Mammary epithelial cell (primary cell): ENCODE measurements at regions of chr16 and their contacts with region 1.

Region 1: GRCh38 chr16:8936421-8936820 is 27.3 kb downstream of the USP7 start:
- DNase-seq: peak; percentile 74
- H3K4me3 ChIP-seq: no peak overlapping the region
- H3K27ac ChIP-seq: no peak overlapping the region
- H3K4me1 ChIP-seq: peaks cover 14% of the 10 kb centered on the region
- H3K27me3 ChIP-seq: no peaks in the 10 kb centered on the region
- CTCF ChIP-seq: peak; percentile 66 to 88

Region 2: DNA sequence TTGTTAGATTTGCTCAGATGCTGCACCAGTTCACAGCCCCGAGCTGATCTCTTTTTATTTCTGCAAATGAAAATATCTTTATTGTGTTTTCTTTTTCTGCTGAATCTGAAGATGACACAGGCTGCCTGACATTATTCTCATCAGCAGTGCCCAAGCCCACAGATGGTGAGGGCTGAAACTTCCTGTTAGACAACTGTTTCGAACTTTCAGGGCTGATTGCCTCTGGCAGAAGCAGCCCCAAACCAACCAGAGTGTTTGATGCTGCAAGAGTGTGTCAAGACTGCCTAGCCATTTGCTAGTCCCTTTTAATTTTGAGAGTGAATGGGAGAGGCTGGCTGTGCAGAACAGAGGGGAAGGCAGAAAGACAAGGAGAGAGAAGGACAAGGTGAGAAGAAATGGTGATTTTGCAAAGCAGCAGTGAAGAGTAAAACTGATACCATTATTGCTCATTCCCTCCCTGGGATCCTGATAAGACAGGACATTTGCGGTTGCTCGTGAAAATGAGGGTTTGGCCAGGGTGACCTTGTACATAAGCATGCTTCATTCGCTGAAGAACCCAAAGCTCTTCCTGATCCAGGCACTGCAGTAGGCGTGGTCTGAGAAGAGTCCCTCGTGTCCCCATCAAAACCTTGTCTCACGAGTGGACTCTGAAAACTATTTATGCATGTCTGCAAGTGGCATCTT is 423.3 kb before region 1 on chr16:
- CTCF ChIA-PET with region 1: no interaction called
- dilution Hi-C with region 1: no loop called
- in situ Hi-C with region 1: no loop called
- intact Hi-C with region 1: no loop called
- DNase-seq: no peak
- H3K4me3 ChIP-seq: no peak overlapping the region
- H3K27ac ChIP-seq: no peak overlapping the region
- H3K4me1 ChIP-seq: no peaks in the 10 kb centered on the region
- H3K27me3 ChIP-seq: no peaks in the 10 kb centered on the region
- CTCF ChIP-seq: no peak

Region 3: DNA sequence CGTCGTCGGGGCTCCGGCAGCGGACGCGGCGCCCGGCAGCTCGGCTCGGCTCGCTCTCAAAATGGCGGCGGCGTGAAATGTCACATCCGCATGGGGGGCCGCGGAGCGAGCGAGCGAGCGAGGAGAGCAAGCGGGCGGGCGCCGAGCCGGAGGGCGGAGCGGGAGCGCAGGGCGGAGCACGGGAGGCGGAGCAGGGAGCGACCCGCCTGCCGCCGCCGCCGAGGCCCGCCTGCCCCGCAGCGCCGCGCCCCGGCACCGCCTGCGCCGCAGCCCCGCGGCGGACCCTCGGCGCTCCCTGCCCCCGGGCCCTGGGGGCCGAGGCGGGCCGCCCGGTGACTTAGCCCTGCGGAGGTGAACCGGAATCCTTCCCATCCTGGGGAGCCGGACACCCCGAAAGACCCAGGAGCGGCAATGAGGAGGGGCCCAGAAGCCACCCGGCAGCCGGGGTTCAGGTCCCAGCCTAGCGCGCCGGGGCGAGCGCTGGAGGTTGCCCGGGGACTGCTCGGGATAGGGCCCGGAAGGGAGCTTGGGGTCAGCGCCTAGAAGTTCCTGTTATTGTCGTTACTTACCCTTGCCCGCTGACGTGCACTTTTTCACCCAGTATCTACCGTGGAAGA is 27.5 kb after region 1 on chr16 and contains the start of gene USP7:
- CTCF ChIA-PET with region 1: no interaction called
- dilution Hi-C with region 1: no loop called
- in situ Hi-C with region 1: no loop called
- intact Hi-C with region 1: loop called (anchors 2 kb)
- DNase-seq: peak; percentile 88
- H3K4me3 ChIP-seq: peak within 1 kb of the TSS; percentile 69 to 80 (median 69)
- H3K27ac ChIP-seq: peak within 1 kb of the TSS; percentile 24
- H3K4me1 ChIP-seq: peaks cover 16% of the 10 kb centered on the region
- H3K27me3 ChIP-seq: no peaks in the 10 kb centered on the region
- CTCF ChIP-seq: no peak
- total RNA-seq, gene USP7: 52.7 to 113 TPM

Region 4: DNA sequence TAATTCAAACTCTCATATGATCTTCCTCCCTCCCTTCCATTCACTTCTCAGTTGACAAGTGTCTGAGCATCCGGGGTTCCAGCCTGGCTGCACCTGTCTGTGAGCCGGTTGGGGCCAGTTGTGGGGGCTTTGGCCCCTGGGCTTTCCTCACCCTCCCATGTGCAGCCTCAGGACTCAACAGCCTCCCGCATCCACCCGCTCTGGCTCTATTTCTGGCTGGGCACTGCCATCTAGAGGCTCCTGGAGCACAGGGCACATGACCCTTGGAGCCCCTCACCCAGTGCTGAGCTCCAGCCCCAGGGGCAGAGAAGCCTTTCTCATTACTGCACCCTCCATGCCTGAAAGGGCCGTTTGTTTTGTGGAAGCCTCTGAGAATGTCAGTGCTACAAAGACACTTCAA is 198.3 kb after region 1 on chr16:
- CTCF ChIA-PET with region 1: no interaction called
- dilution Hi-C with region 1: no loop called
- in situ Hi-C with region 1: no loop called
- intact Hi-C with region 1: loop called (anchors 10 kb)
- DNase-seq: no peak
- H3K4me3 ChIP-seq: no peak overlapping the region
- H3K27ac ChIP-seq: no peak overlapping the region
- H3K4me1 ChIP-seq: peaks cover 3% of the 10 kb centered on the region
- H3K27me3 ChIP-seq: no peaks in the 10 kb centered on the region
- CTCF ChIP-seq: peak; percentile 42 to 70

Region 5: GRCh38 chr16:10338426-10338825 is 1402.0 kb after region 1 on chr16:
- CTCF ChIA-PET with region 1: interaction called, 19 read pairs
- dilution Hi-C with region 1: no loop called
- in situ Hi-C with region 1: no loop called
- intact Hi-C with region 1: no loop called
- DNase-seq: peak; percentile 17
- H3K4me3 ChIP-seq: no peak overlapping the region
- H3K27ac ChIP-seq: no peak overlapping the region
- H3K4me1 ChIP-seq: peaks cover 6% of the 10 kb centered on the region
- H3K27me3 ChIP-seq: no peaks in the 10 kb centered on the region
- CTCF ChIP-seq: no peak